ENCODE measurements at regions of chr13 and their contacts with region 1.

Region 1: GRCh38 chr13:112606109-112607001 is 18.4 kb upstream of the TUBGCP3 start:
- DNase-seq: peak; percentile 94 to 97 (median 94)
- ATAC-seq: peak; percentile 100
- H3K4me3 ChIP-seq: no peak overlapping the region
- H3K4me1 ChIP-seq: no peaks in the 10 kb centered on the region
- CTCF ChIP-seq: peak; percentile 95

Region 2: GRCh38 chr13:111474136-111475002 is 1132.0 kb before region 1 on chr13:
- intact Hi-C with region 1: loop called in 1 of 2 experiments (anchors 10 kb)
- DNase-seq: peak in 1 of 3 donors; percentile 12
- ATAC-seq: peak; percentile 31
- H3K4me3 ChIP-seq: no peak overlapping the region
- H3K4me1 ChIP-seq: no peaks in the 10 kb centered on the region
- CTCF ChIP-seq: no peak